ENCODE measurements at regions of chr20 and their contacts with region 1.

Region 1: DNA sequence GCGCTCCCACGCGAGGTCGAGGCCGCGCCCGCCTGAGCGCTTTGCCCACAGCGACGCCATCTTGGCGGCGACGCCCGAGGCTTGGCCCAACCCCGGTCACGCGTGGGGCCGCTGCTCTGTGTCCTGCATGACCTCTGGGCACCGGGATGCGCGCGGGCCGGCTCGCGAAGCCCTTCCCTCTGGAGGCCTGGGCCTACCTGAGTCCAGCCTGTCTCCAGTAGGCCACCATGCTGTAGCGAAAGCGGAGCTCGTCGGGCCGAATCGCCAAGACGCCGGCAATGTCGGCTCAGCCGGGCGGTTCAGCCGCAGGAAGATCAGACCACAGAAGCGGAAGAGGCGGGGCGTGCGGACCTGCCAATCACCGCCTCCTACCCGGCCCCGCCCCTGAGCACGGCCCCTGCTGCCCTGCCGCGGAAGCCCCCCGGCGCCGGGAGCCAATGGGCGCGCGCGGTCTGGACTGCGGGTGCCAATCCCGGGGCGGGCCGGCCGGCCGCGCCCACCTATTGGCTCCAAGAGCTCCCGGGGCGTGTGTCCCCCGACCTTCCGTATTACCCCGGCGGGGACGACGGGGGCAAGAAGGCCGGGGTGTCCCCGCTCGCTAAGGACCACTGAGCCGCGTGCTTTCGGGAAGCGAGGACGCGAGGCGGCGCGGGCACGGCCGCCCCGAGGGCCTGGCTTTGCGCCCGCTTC is at the start of gene ATP5F1E:
- DNase-seq: peak; percentile 95
- ATAC-seq: peak; percentile 99
- H3K4me3 ChIP-seq: peak within 1 kb of the TSS; percentile 78 to 97 (median 93)
- H3K27ac ChIP-seq: peak within 1 kb of the TSS; percentile 68
- H3K4me1 ChIP-seq: peaks cover 52% of the 10 kb centered on the region
- H3K27me3 ChIP-seq: no peaks in the 10 kb centered on the region; a peak in 1 of 5 replicates
- CTCF ChIP-seq: peak; percentile 21; the same call in 1 of the 2 replicates
- EP300 ChIP-seq: 0 out of 4 replicates have a peak, but pooled peaks of 1 of the 2 experiments have one; percentile 5
- POLR2A ChIP-seq: peak; percentile 91 to 95
- RAD21 ChIP-seq: peak; percentile 69
- total RNA-seq, gene ATP5F1E: 134 and 163 TPM in 2 replicates

Region 2: DNA sequence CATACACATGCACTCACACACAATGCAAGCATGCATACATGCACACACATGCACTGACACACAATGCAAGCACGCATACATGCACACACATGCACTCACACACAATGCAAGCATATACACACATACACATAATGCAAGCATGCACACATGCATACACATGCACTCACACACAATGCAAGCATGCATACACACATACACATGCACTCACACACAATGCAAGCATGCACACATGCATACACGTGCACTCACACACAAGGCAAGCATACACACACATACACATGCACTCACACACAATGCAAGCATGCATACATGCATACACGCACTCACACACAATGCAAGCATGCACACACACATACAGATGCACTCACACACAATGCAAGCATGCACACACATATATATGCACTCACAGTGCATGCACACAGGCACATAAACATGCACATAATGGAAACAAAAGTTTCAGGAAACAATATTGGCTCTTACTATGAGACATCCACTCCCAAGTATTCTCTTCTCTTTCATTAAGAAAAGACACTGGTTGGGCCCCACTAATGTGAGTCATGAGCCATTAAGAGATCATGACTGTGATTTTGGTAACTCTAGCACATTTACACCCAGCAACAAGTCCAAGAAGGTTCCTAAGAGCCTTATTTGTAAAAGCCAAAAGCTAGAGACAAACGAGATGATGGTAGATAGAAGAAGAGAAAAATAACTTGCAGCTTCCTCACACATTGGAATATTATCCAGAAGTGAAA is 539.2 kb before region 1 on chr20:
- CTCF ChIA-PET with region 1: no interaction called
- POLR2A ChIA-PET with region 1: no interaction called
- in situ Hi-C with region 1: no loop called
- intact Hi-C with region 1: no loop called
- DNase-seq: no peak
- ATAC-seq: no peak
- H3K4me3 ChIP-seq: no peak overlapping the region
- H3K27ac ChIP-seq: no peak overlapping the region
- H3K4me1 ChIP-seq: no peaks in the 10 kb centered on the region
- H3K27me3 ChIP-seq: peaks cover 2 to 6% of the 10 kb centered on the region in 2 experiments; a peak in 2 of 5 replicates
- CTCF ChIP-seq: no peak
- EP300 ChIP-seq: no peak
- POLR2A ChIP-seq: no peak
- RAD21 ChIP-seq: no peak

Region 3: GRCh38 chr20:58888521-58889333 is 143.4 kb before region 1 on chr20:
- CTCF ChIA-PET with region 1: no interaction called
- POLR2A ChIA-PET with region 1: interaction called, 14 read pairs
- in situ Hi-C with region 1: no loop called
- intact Hi-C with region 1: loop called (anchors 2 kb)
- DNase-seq: peak; percentile 76
- ATAC-seq: peak; percentile 62
- H3K4me3 ChIP-seq: peak overlapping the region; percentile 78 to 98 (median 86)
- H3K27ac ChIP-seq: peak overlapping the region; percentile 49
- H3K4me1 ChIP-seq: peaks cover 24% of the 10 kb centered on the region
- H3K27me3 ChIP-seq: peaks cover 0 to 3% of the 10 kb centered on the region in 2 experiments; a peak in 2 of 5 replicates
- CTCF ChIP-seq: no peak
- EP300 ChIP-seq: no peak
- POLR2A ChIP-seq: peak; percentile 93 to 96
- RAD21 ChIP-seq: peak; percentile 33; the same call in 1 of the 2 replicates

Region 4: GRCh38 chr20:58993332-58994201 is 38.6 kb before region 1 on chr20:
- CTCF ChIA-PET with region 1: no interaction called
- POLR2A ChIA-PET with region 1: interaction called, 19 read pairs
- in situ Hi-C with region 1: no loop called
- intact Hi-C with region 1: loop called (anchors 5 kb)
- DNase-seq: no peak
- ATAC-seq: no peak
- H3K4me3 ChIP-seq: no peak overlapping the region
- H3K27ac ChIP-seq: no peak overlapping the region
- H3K4me1 ChIP-seq: peaks cover 67% of the 10 kb centered on the region
- H3K27me3 ChIP-seq: no peaks in the 10 kb centered on the region
- CTCF ChIP-seq: no peak
- EP300 ChIP-seq: no peak
- POLR2A ChIP-seq: no peak
- RAD21 ChIP-seq: no peak

Region 5: DNA sequence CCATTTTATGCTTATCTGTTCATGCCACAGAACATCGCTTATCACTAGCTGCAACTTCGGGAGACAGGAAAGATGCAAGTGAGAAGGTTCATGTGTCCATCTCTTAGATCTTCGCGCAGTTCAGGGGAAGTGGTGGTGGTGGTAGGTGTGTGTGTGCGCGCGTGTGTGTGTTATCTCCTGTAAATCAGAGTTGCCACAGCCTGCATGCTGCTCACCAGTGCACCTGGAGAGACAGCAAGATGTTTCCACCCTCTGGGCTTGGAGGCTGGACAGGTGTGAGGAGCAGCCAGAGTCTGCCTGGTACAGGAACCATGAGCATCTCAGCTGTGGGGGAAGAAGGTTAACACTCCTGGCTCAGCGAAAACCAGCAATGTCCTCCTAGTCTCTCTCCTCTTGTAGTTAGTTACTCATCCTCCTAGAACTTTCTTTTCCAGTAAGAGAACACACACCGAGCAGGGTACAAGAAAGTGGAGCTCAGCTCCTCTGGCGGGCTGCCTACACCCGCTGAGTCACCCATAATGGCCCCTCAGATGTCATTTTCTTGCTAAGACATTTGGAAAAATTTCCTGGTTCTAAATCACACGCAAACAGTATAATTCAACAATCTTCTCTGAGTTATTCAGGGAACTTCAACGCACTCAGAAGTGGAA is 18.1 kb before region 1 on chr20:
- CTCF ChIA-PET with region 1: no interaction called
- POLR2A ChIA-PET with region 1: interaction called, 61 read pairs
- in situ Hi-C with region 1: no loop called
- intact Hi-C with region 1: loop called (anchors 1 kb)
- DNase-seq: no peak
- ATAC-seq: no peak
- H3K4me3 ChIP-seq: peak overlapping the region in 2 of 3 experiments; percentile 47 to 62; a peak in 4 of 6 replicates
- H3K27ac ChIP-seq: no peak overlapping the region
- H3K4me1 ChIP-seq: peaks cover 100% of the 10 kb centered on the region
- H3K27me3 ChIP-seq: no peaks in the 10 kb centered on the region
- CTCF ChIP-seq: no peak
- EP300 ChIP-seq: no peak
- POLR2A ChIP-seq: no peak
- RAD21 ChIP-seq: no peak

Region 6: GRCh38 chr20:59042796-59043660 is 10.9 kb after region 1 on chr20:
- CTCF ChIA-PET with region 1: no interaction called
- POLR2A ChIA-PET with region 1: interaction called, 21 read pairs
- in situ Hi-C with region 1: no loop called
- intact Hi-C with region 1: no loop called
- DNase-seq: peak; percentile 56
- ATAC-seq: peak; percentile 86
- H3K4me3 ChIP-seq: peak overlapping the region; percentile 20 to 67 (median 61); a peak in 4 of 6 replicates
- H3K27ac ChIP-seq: peak overlapping the region; percentile 46
- H3K4me1 ChIP-seq: peaks cover 26% of the 10 kb centered on the region
- H3K27me3 ChIP-seq: peaks cover 2 to 3% of the 10 kb centered on the region in 2 experiments; a peak in 2 of 5 replicates
- CTCF ChIP-seq: no peak
- EP300 ChIP-seq: no peak
- POLR2A ChIP-seq: no peak
- RAD21 ChIP-seq: no peak